PC-9 (cell line): ENCODE measurements at regions of chr5 and their contacts with region 1.

Region 1: GRCh38 chr5:132363431-132364112 is 5.9 kb upstream of the SLC22A5 start:
- DNase-seq: peak; percentile 49 to 62
- H3K4me3 ChIP-seq: no peak overlapping the region
- H3K27ac ChIP-seq: peak overlapping the region; percentile 92; the same call in 1 of the 2 replicates
- H3K4me1 ChIP-seq: peaks cover 43% of the 10 kb centered on the region
- H3K27me3 ChIP-seq: no peaks in the 10 kb centered on the region
- CTCF ChIP-seq: no peak

Region 2: GRCh38 chr5:131796793-131797693 is 566.5 kb before region 1 on chr5 and contains the start of gene FNIP1:
- CTCF ChIA-PET with region 1: no interaction called
- POLR2A ChIA-PET with region 1: interaction called, 11 read pairs
- intact Hi-C with region 1: no loop called
- DNase-seq: peak; percentile 90 to 98
- H3K4me3 ChIP-seq: peak within 1 kb of the TSS; percentile 95
- H3K27ac ChIP-seq: peak within 1 kb of the TSS; percentile 72
- H3K4me1 ChIP-seq: peaks cover 14% of the 10 kb centered on the region
- H3K27me3 ChIP-seq: no peaks in the 10 kb centered on the region
- CTCF ChIP-seq: no peak
- total RNA-seq, gene FNIP1: 20.4 and 23.5 TPM in 2 replicates

Region 3: DNA sequence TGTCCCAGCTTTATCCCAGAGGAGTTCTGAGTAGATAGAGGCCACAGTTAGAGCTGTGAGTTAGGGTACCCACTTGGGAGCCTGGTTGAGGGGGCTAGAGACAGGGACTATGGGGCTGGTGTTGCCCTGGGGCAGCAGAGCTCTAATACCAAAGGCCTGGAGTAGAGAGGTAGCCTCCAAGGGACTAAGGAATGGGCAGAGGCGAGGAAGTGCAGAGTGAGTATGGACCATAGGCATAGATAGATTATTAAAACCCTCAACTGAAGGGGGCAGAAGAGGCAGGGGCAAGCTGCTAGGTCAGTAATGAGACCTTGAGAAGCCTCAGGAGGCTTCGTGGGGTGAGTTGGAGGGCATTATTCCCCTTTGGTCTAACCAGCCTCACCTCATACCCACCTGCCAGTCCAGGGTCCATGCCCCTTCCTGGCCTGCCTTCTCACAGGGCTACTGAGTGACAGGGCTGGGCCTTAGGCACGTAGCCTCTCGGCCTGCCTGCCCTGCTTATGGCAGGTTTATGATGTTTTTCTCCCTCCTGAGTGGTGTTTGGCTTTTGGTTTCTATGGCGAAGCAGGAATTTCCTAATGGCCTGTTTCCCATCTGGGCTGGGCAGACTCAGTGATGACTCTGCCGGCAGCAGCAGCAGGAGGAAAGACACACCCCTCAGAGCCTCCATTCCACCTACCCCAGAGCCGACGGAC is 98.1 kb before region 1 on chr5:
- CTCF ChIA-PET with region 1: interaction called, 8 read pairs
- POLR2A ChIA-PET with region 1: no interaction called
- intact Hi-C with region 1: loop called (anchors 1 kb)
- DNase-seq: peak; percentile 87 to 91
- H3K4me3 ChIP-seq: no peak overlapping the region
- H3K27ac ChIP-seq: peak overlapping the region; percentile 58
- H3K4me1 ChIP-seq: peaks cover 47% of the 10 kb centered on the region
- H3K27me3 ChIP-seq: no peaks in the 10 kb centered on the region
- CTCF ChIP-seq: no peak; the same call in 1 of the 2 replicates

Region 4: DNA sequence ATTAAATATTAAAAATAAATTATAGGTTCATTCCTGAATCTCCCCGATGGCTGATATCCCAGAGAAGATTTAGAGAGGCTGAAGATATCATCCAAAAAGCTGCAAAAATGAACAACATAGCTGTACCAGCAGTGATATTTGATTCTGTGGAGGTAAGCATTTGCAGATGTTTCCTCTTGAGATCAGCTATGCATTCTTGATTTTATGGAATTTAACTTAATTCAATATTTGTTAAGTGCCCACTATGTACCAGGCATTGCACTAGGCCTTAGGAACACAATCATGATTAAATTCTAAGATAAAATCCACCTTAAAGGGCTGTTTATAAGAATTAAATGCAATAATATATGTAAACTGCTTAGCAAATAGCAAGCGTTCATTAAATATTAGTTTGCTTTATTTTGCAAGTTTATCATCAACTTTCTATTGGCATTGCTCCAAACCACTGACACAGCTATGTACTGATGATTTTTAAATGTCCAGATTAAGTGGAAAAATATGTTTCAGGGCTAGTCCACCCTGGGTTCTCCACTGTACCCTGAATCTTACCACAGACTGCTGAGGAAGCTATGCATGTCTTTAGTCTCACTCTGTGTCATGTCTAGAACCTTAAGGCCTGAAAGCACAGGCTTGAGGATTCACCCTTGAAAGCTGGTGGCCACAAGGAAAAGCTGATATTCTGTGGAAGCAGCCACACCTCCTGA is 36.2 kb before region 1 on chr5:
- CTCF ChIA-PET with region 1: no interaction called
- POLR2A ChIA-PET with region 1: no interaction called
- intact Hi-C with region 1: no loop called
- DNase-seq: no peak
- H3K4me3 ChIP-seq: no peak overlapping the region
- H3K27ac ChIP-seq: no peak overlapping the region
- H3K4me1 ChIP-seq: no peaks in the 10 kb centered on the region
- H3K27me3 ChIP-seq: no peaks in the 10 kb centered on the region
- CTCF ChIP-seq: no peak

Region 5: DNA sequence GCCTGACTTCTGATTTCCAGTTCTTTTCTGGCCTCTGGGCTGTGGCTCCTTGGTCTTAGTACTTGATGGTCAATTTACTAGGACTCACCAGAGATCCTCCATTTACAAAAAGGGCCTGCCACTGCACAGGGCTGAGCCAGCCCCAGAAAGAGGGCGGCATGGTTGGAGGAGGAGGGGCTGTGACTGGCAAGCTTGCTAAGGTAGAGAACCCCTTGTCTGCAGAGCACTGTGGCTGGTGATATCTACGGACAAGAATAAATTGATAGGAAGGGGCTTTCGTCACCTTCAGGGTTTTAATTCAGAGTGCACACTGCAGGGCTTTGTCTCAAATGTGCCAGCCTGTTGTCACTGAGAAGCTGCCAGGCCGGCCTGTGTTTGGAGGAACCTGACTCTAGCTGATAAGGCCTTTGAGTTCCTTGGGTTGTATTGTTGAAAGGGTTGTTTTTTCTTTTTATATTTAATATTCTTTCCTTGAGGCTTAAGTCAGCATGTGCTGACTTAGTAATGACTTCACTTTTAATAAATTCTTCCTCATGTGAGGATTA is 21.0 kb after region 1 on chr5:
- CTCF ChIA-PET with region 1: no interaction called
- POLR2A ChIA-PET with region 1: no interaction called
- intact Hi-C with region 1: no loop called
- DNase-seq: no peak
- H3K4me3 ChIP-seq: no peak overlapping the region
- H3K27ac ChIP-seq: no peak overlapping the region
- H3K4me1 ChIP-seq: peaks cover 35% of the 10 kb centered on the region
- H3K27me3 ChIP-seq: no peaks in the 10 kb centered on the region
- CTCF ChIP-seq: no peak

Region 6: GRCh38 chr5:133051580-133052332 is 688.2 kb after region 1 on chr5 and contains the start of gene HSPA4:
- CTCF ChIA-PET with region 1: no interaction called
- POLR2A ChIA-PET with region 1: interaction called, 24 read pairs
- intact Hi-C with region 1: no loop called
- DNase-seq: peak; percentile 93 to 95
- H3K4me3 ChIP-seq: peak within 1 kb of the TSS; percentile 71
- H3K27ac ChIP-seq: peak within 1 kb of the TSS; percentile 94
- H3K4me1 ChIP-seq: peaks cover 45% of the 10 kb centered on the region
- H3K27me3 ChIP-seq: no peaks in the 10 kb centered on the region
- CTCF ChIP-seq: no peak
- total RNA-seq, gene HSPA4: 105 and 140 TPM in 2 replicates